Activated T-helper 1 cell treated with anti-CD3 and anti-CD28 coated beads, Interleukin-12 subunit alpha, Interleukin-12 subunit beta, Interleukin-2, Interleukin-4 antibody, amounts not matched to agents 30 ng/mL and 10 ng/mL and 1 ng/mL, durations not matched to agents 14 hours and 24 hours and 36 hours (primary cell): ENCODE measurements at regions of chr9 and their contacts with region 1.

Region 1: GRCh38 chr9:97737429-97737828 is 40.3 kb upstream of the XPA start:
- DNase-seq: no peak
- H3K4me3 Mint-ChIP-seq: no peak overlapping the region
- H3K27ac Mint-ChIP-seq: no peak overlapping the region
- H3K4me1 Mint-ChIP-seq: peaks cover 11% of the 10 kb centered on the region
- H3K27me3 Mint-ChIP-seq: peaks cover 41% of the 10 kb centered on the region

Region 2: DNA sequence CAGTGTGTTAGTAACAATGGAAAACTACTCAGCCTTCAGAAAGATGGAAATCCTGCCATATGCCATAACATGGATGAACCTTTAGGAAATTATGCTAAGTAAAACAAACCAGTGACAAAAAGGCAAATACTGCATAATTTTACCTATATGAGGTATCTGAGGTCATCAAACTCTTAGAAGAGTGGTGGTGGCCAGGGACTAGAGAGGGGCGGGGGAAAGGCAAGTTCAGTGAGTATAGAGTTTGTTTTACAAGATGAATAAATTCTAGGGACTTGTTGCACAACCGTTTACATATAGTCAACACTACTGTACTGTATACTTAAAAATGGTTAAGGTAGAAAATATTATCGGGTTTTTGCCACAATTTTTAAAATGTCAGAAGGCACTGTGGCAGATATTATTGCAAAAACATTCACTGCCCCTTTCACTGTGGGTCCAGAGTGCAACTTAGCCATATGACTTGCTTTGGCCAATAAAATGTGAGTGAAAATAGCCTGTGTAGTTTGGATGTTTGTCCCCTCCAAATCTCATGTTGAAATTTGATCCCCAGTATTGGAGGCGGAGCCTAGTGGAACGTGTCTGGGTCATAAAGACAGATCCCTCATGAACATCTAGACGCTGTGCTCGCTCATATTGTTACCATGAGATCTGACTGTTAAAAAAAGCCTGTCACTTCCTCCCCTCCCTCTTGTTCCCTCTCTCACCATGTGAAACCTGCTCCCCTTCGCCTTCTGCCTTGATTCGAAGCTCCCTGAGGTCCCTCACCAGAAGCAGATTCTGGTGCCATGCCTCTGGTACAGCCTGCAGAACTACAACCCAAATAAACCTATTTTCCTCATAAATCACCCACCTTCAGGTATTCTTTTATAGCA is 1328.8 kb before region 1 on chr9:
- intact Hi-C with region 1: no loop called
- DNase-seq: no peak
- H3K4me3 Mint-ChIP-seq: no peak overlapping the region
- H3K27ac Mint-ChIP-seq: peak overlapping the region; percentile 21
- H3K4me1 Mint-ChIP-seq: peaks cover 50% of the 10 kb centered on the region
- H3K27me3 Mint-ChIP-seq: no peaks in the 10 kb centered on the region

Region 3: GRCh38 chr9:97773723-97774122 is 36.3 kb after region 1 on chr9:
- intact Hi-C with region 1: loop called (anchors 5 kb)
- DNase-seq: no peak
- H3K4me3 Mint-ChIP-seq: no peak overlapping the region
- H3K27ac Mint-ChIP-seq: no peak overlapping the region
- H3K4me1 Mint-ChIP-seq: no peaks in the 10 kb centered on the region
- H3K27me3 Mint-ChIP-seq: peaks cover 20% of the 10 kb centered on the region